ENCODE measurements at regions of chr19 and their contacts with region 1.

Region 1: GRCh38 chr19:11374433-11375142 is at the start of gene SWSAP1:
- DNase-seq: peak; percentile 98 to 100 (median 99)
- H3K4me3 ChIP-seq: peak within 1 kb of the TSS; percentile 57 to 77
- H3K4me3 Mint-ChIP-seq: no peak within 1 kb of the TSS
- H3K27ac ChIP-seq: peak within 1 kb of the TSS; percentile 84
- H3K27ac Mint-ChIP-seq: peak within 1 kb of the TSS in 1 of 7 donors; percentile 79
- H3K4me1 ChIP-seq: peaks cover 36% of the 10 kb centered on the region
- H3K4me1 Mint-ChIP-seq: peaks cover 7 to 17% (median 11%) of the 10 kb centered on the region in 4 donors
- H3K27me3 ChIP-seq: no peaks in the 10 kb centered on the region
- H3K27me3 Mint-ChIP-seq: no peaks in the 10 kb centered on the region
- total RNA-seq, gene SWSAP1: 4.0 to 4.8 TPM

Region 2: GRCh38 chr19:11090054-11090900 is 284.3 kb before region 1 on chr19:
- CTCF ChIA-PET with region 1: no interaction called
- POLR2A ChIA-PET with region 1: interaction called, 14 read pairs
- intact Hi-C with region 1: no loop called
- DNase-seq: peak; percentile 94 to 98 (median 97)
- H3K4me3 ChIP-seq: peak overlapping the region; percentile 43 to 64
- H3K4me3 Mint-ChIP-seq: peak overlapping the region; percentile 81 to 93 (median 88)
- H3K27ac ChIP-seq: peak overlapping the region; percentile 98
- H3K27ac Mint-ChIP-seq: peak overlapping the region; percentile 93 to 100 (median 99)
- H3K4me1 ChIP-seq: peaks cover 61% of the 10 kb centered on the region
- H3K4me1 Mint-ChIP-seq: peaks cover 26 to 59% (median 43%) of the 10 kb centered on the region in 4 donors
- H3K27me3 ChIP-seq: no peaks in the 10 kb centered on the region
- H3K27me3 Mint-ChIP-seq: no peaks in the 10 kb centered on the region

Region 3: GRCh38 chr19:11155373-11156120 is 219.0 kb before region 1 on chr19 and contains the start of gene SPC24:
- CTCF ChIA-PET with region 1: no interaction called
- POLR2A ChIA-PET with region 1: interaction called, 10 read pairs
- intact Hi-C with region 1: no loop called
- DNase-seq: peak; percentile 88 to 94 (median 93)
- H3K4me3 ChIP-seq: peak within 1 kb of the TSS; percentile 74 to 84
- H3K4me3 Mint-ChIP-seq: peak within 1 kb of the TSS; percentile 85 to 94 (median 88)
- H3K27ac ChIP-seq: peak within 1 kb of the TSS; percentile 20
- H3K27ac Mint-ChIP-seq: peak within 1 kb of the TSS; percentile 55 to 93 (median 82)
- H3K4me1 ChIP-seq: peaks cover 20% of the 10 kb centered on the region
- H3K4me1 Mint-ChIP-seq: peaks cover 7 to 19% (median 14%) of the 10 kb centered on the region in 4 donors
- H3K27me3 ChIP-seq: no peaks in the 10 kb centered on the region
- H3K27me3 Mint-ChIP-seq: no peaks in the 10 kb centered on the region
- total RNA-seq, gene SPC24: 0.84 to 1.9 TPM

Region 4: GRCh38 chr19:11346092-11346940 is 28.3 kb before region 1 on chr19 and contains the starts of genes CCDC159 and TMEM205:
- CTCF ChIA-PET with region 1: interaction called, 6 read pairs
- POLR2A ChIA-PET with region 1: interaction called, 54 read pairs
- intact Hi-C with region 1: loop called (anchors 1 kb)
- DNase-seq: peak; percentile 97 to 100 (median 99)
- H3K4me3 ChIP-seq: peak within 1 kb of the TSS; percentile 92 to 96
- H3K4me3 Mint-ChIP-seq: peak within 1 kb of the TSS; percentile 95 to 98 (median 97)
- H3K27ac ChIP-seq: peak within 1 kb of the TSS; percentile 88
- H3K27ac Mint-ChIP-seq: peak within 1 kb of the TSS; percentile 80 to 98 (median 95)
- H3K4me1 ChIP-seq: peaks cover 17% of the 10 kb centered on the region
- H3K4me1 Mint-ChIP-seq: peaks cover 17 to 32% (median 25%) of the 10 kb centered on the region in 4 donors
- H3K27me3 ChIP-seq: no peaks in the 10 kb centered on the region
- H3K27me3 Mint-ChIP-seq: no peaks in the 10 kb centered on the region
- total RNA-seq, gene CCDC159: 90.7 to 91.8 TPM
- total RNA-seq, gene TMEM205: 26.1 to 28.5 TPM

Region 5: DNA sequence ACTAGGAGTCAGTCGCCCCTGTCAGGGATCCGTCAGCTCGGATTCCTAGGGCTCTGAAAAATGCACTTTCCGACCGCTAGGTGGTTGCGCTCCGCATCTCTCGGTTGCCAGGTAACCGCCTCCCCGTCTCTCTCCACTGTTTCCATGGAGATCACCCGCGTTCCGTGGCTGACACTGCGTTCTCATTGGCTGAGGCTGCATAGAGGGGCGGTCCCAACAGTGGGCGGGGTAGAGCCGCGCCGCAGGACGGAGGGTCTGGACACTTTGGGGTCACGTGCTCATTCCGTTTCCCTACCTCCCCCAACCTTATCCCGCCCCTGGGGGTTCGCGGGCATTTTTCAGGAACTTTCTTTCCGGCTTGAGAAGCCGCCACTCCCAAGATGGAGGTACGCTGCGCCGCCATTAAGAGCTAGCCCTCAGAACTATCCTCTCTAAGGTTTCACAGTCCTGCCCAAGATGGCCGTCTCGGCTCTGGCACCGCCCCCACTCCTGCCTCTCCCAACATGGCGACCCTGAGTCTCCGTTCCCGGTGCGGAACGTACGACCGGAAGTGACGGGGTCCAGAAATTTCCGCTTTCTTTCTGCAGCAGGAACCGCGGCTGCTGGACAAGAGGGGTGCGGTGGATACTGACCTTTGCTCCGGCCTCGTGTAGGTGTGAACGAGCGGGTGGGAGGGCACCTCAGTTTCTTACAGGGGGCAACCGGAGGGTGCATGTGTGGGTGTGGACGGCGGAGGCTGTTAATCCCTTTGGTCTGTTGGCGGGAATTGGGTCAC is 60.7 kb after region 1 on chr19 and contains the starts of genes ODAD3 and PRKCSH:
- CTCF ChIA-PET with region 1: interaction called, 9 read pairs
- POLR2A ChIA-PET with region 1: interaction called, 32 read pairs
- intact Hi-C with region 1: loop called (anchors 1 kb)
- DNase-seq: peak; percentile 99
- H3K4me3 ChIP-seq: peak within 1 kb of the TSS; percentile 95 to 97
- H3K4me3 Mint-ChIP-seq: peak within 1 kb of the TSS; percentile 97 to 100 (median 99)
- H3K27ac ChIP-seq: peak within 1 kb of the TSS; percentile 74
- H3K27ac Mint-ChIP-seq: peak within 1 kb of the TSS; percentile 95 to 100 (median 98)
- H3K4me1 ChIP-seq: peaks cover 19% of the 10 kb centered on the region
- H3K4me1 Mint-ChIP-seq: peaks cover 14 to 31% (median 23%) of the 10 kb centered on the region in 4 donors
- H3K27me3 ChIP-seq: no peaks in the 10 kb centered on the region
- H3K27me3 Mint-ChIP-seq: peaks cover 2 to 3% of the 10 kb centered on the region in 2 donors
- total RNA-seq, gene ODAD3: not detected
- total RNA-seq, gene PRKCSH: 300 TPM

Region 6: GRCh38 chr19:11505032-11505503 is 130.5 kb after region 1 on chr19:
- CTCF ChIA-PET with region 1: no interaction called
- POLR2A ChIA-PET with region 1: interaction called, 4 read pairs
- intact Hi-C with region 1: loop called (anchors 1 kb)
- DNase-seq: peak; percentile 95 to 97 (median 96)
- H3K4me3 ChIP-seq: peak overlapping the region; percentile 59 to 71
- H3K4me3 Mint-ChIP-seq: peak overlapping the region; percentile 79 to 94 (median 86)
- H3K27ac ChIP-seq: peak overlapping the region; percentile 95
- H3K27ac Mint-ChIP-seq: peak overlapping the region; percentile 88 to 94 (median 92)
- H3K4me1 ChIP-seq: peaks cover 14% of the 10 kb centered on the region
- H3K4me1 Mint-ChIP-seq: peaks cover 15 to 28% (median 18%) of the 10 kb centered on the region in 4 donors
- H3K27me3 ChIP-seq: no peaks in the 10 kb centered on the region
- H3K27me3 Mint-ChIP-seq: no peaks in the 10 kb centered on the region